ENCODE measurements at regions of chr6 and their contacts with region 1.

Region 1: DNA sequence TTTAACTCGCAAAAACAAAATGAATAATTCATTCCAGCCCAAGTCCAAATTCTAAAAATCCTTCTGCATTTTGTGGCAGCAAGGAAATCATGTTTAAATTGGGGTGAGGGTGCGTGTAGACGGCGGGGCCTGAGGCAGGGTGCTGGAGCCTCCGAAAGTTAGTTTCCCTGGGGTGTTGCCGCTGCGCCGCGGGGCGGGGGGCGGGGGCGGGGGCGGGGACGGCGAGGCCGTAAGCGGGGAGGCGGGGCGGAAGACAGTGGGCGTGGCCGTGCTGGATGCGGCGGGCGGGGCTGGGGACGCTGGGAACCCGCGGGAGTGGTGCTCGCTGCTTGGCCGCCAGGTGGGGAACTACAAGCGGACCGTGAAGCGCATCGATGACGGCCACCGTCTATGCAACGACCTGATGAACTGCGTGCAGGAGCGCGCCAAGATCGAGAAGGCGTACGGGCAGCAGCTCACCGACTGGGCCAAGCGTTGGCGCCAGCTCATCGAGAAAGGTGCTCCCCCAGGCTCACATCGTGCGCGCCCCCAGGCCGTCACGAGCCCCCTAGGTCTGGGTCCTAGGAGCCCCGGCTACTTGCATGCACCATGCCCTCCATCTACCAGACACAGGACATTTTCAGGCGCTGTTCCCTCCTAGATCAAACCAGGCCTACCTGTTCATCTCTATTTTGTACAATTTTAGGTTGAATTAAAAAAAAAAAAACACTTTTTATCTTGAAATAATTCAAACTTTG is 29.0 kb downstream of the SPDEF start:
- DNase-seq: peak; percentile 80 to 96
- H3K4me3 ChIP-seq: peak overlapping the region in 3 of 4 experiments; percentile 12 to 54 (median 18); a peak in 3 of 8 replicates
- H3K27ac ChIP-seq: no peak overlapping the region
- H3K4me1 ChIP-seq: peaks cover 3 to 20% (median 9%) of the 10 kb centered on the region in 4 experiments
- H3K27me3 ChIP-seq: no peaks in the 10 kb centered on the region
- CTCF ChIP-seq: peak in 2 of 3 experiments; percentile 64 to 74; a peak in 3 of 4 replicates
- EP300 ChIP-seq: no peak
- POLR2A ChIP-seq: peak in 1 of 2 experiments; percentile 54; a peak in 1 of 3 replicates
- RAD21 ChIP-seq: peak; percentile 60 to 62

Region 2: GRCh38 chr6:34465531-34466241 is 61.5 kb before region 1 on chr6 and contains the start of gene PACSIN1:
- CTCF ChIA-PET with region 1: interaction called, 18 read pairs
- POLR2A ChIA-PET with region 1: interaction called, 11 read pairs
- DNase-seq: peak in 1 of 2 experiments; percentile 77
- H3K4me3 ChIP-seq: peak within 1 kb of the TSS; percentile 56 to 98 (median 64)
- H3K27ac ChIP-seq: no peak within 1 kb of the TSS
- H3K4me1 ChIP-seq: peaks cover 0 to 13% (median 8%) of the 10 kb centered on the region in 4 experiments; a peak in 6 of 7 replicates
- H3K27me3 ChIP-seq: peaks cover 0 to 11% (median 8%) of the 10 kb centered on the region in 4 experiments; a peak in 4 of 7 replicates
- CTCF ChIP-seq: no peak
- EP300 ChIP-seq: no peak
- POLR2A ChIP-seq: no peak
- RAD21 ChIP-seq: no peak
- total RNA-seq, gene PACSIN1: 10.5 and 11.1 TPM in 2 replicates

Region 3: GRCh38 chr6:34514593-34515472 is 12.3 kb before region 1 on chr6:
- CTCF ChIA-PET with region 1: interaction called, 11 read pairs
- POLR2A ChIA-PET with region 1: interaction called, 15 read pairs
- DNase-seq: peak in 1 of 2 experiments; percentile 74
- H3K4me3 ChIP-seq: peak overlapping the region; percentile 24 to 70 (median 64)
- H3K27ac ChIP-seq: no peak overlapping the region
- H3K4me1 ChIP-seq: peaks cover 0 to 17% (median 9%) of the 10 kb centered on the region in 4 experiments; a peak in 5 of 7 replicates
- H3K27me3 ChIP-seq: peaks cover 0 to 6% (median 1%) of the 10 kb centered on the region in 4 experiments; a peak in 2 of 7 replicates
- CTCF ChIP-seq: no peak
- EP300 ChIP-seq: no peak
- POLR2A ChIP-seq: no peak
- RAD21 ChIP-seq: no peak